ENCODE measurements at regions of chr5 and their contacts with region 1.

Region 1: DNA sequence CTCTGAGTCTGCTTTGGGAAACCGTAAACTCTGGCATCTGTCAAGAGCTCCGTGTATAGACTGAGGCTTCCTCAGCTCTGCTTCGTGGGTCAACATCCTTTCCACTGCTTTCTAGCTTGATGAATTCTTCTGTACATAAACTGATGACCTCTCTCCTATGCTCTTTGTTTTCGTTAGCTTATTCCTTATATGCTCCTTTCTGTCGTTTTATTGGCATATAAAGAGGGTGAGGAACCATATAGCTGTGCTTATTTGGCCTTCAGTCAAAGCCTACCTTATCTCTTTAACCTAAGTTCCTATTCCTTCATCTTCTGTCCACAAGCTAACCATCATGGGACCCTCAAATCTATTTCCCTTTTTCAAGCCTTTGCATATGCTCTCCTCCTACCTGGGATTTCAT is 39.4 kb upstream of the CARTPT start:
- DNase-seq: no peak
- ATAC-seq: no peak
- H3K4me3 ChIP-seq: no peak overlapping the region
- H3K27ac ChIP-seq: no peak overlapping the region
- H3K4me1 ChIP-seq: no peaks in the 10 kb centered on the region
- H3K27me3 ChIP-seq: 0 out of 2 replicates have a peak, but pooled peaks cover 6% of the 10 kb centered on the region
- CTCF ChIP-seq: no peak
- POLR2A ChIP-seq: no peak
- RAD21 ChIP-seq: no peak

Region 2: GRCh38 chr5:71640408-71640807 is 39.3 kb before region 1 on chr5:
- CTCF ChIA-PET with region 1: no interaction called
- POLR2A ChIA-PET with region 1: no interaction called
- RAD21 ChIA-PET with region 1: no interaction called
- intact Hi-C with region 1: loop called (anchors 5 kb)
- DNase-seq: no peak
- ATAC-seq: no peak
- H3K4me3 ChIP-seq: no peak overlapping the region
- H3K27ac ChIP-seq: no peak overlapping the region
- H3K4me1 ChIP-seq: no peaks in the 10 kb centered on the region
- H3K27me3 ChIP-seq: no peaks in the 10 kb centered on the region
- CTCF ChIP-seq: no peak
- POLR2A ChIP-seq: no peak
- RAD21 ChIP-seq: no peak

Region 3: GRCh38 chr5:71782771-71783770 is 103.4 kb after region 1 on chr5:
- CTCF ChIA-PET with region 1: no interaction called
- POLR2A ChIA-PET with region 1: no interaction called
- RAD21 ChIA-PET with region 1: no interaction called
- intact Hi-C with region 1: no loop called
- DNase-seq: peak; percentile 59
- ATAC-seq: peak; percentile 89
- H3K4me3 ChIP-seq: no peak overlapping the region
- H3K27ac ChIP-seq: no peak overlapping the region
- H3K4me1 ChIP-seq: peaks cover 0 to 9% of the 10 kb centered on the region in 2 experiments; a peak in 2 of 4 replicates
- H3K27me3 ChIP-seq: no peaks in the 10 kb centered on the region
- CTCF ChIP-seq: peak; percentile 79 to 91 (median 87); a peak in 5 of 6 replicates
- POLR2A ChIP-seq: no peak
- RAD21 ChIP-seq: peak; percentile 93